PC-9 (cell line): ENCODE measurements at regions of chr10 and their contacts with region 1.

Region 1: GRCh38 chr10:52499281-52499680 is 185.2 kb downstream of the DKK1 start:
- DNase-seq: peak; percentile 65 to 87
- H3K4me3 ChIP-seq: peak overlapping the region; percentile 47; the same call in 1 of the 2 replicates
- H3K27ac ChIP-seq: peak overlapping the region; percentile 69
- H3K4me1 ChIP-seq: peaks cover 5% of the 10 kb centered on the region; the same call in 1 of the 2 replicates
- H3K27me3 ChIP-seq: no peaks in the 10 kb centered on the region
- CTCF ChIP-seq: no peak

Region 2: GRCh38 chr10:52539463-52539862 is 40.2 kb after region 1 on chr10:
- CTCF ChIA-PET with region 1: no interaction called
- POLR2A ChIA-PET with region 1: interaction called, 4 read pairs
- intact Hi-C with region 1: loop called (anchors 2 kb)
- DNase-seq: peak; percentile 26 to 65
- H3K4me3 ChIP-seq: no peak overlapping the region
- H3K27ac ChIP-seq: no peak overlapping the region
- H3K4me1 ChIP-seq: peaks cover 9% of the 10 kb centered on the region
- H3K27me3 ChIP-seq: no peaks in the 10 kb centered on the region
- CTCF ChIP-seq: no peak

Region 3: DNA sequence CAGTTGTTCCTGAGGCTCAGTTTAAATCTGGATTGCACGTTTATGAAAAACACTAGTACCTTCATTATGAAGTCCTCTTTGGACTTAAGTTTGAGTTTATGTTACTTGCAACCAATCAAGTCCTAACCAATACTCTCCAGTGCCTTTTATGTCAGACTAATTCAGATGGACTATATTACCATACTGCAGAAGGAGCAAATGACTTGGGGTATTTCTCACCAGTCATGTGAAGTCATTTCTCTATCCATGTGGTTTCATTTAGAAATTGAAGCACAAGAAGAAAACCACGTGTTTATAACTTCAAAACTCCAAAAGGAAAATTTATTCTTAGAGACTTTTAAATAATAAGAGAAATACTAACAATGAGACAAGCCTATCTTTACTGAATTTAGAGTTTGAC is 71.7 kb after region 1 on chr10:
- CTCF ChIA-PET with region 1: no interaction called
- POLR2A ChIA-PET with region 1: no interaction called
- intact Hi-C with region 1: no loop called
- DNase-seq: no peak
- H3K4me3 ChIP-seq: no peak overlapping the region
- H3K27ac ChIP-seq: no peak overlapping the region
- H3K4me1 ChIP-seq: peaks cover 7% of the 10 kb centered on the region
- H3K27me3 ChIP-seq: no peaks in the 10 kb centered on the region
- CTCF ChIP-seq: no peak

Region 4: GRCh38 chr10:53508197-53508596 is 1008.9 kb after region 1 on chr10:
- CTCF ChIA-PET with region 1: no interaction called
- POLR2A ChIA-PET with region 1: no interaction called
- intact Hi-C with region 1: no loop called
- DNase-seq: no peak
- H3K4me3 ChIP-seq: no peak overlapping the region
- H3K27ac ChIP-seq: no peak overlapping the region
- H3K4me1 ChIP-seq: no peaks in the 10 kb centered on the region
- H3K27me3 ChIP-seq: no peaks in the 10 kb centered on the region
- CTCF ChIP-seq: no peak